ENCODE measurements at regions of chr2 and their contacts with region 1.

Region 1: GRCh38 chr2:198063242-198063641 is 258.8 kb downstream of the PLCL1 start:
- DNase-seq: no peak
- H3K4me3 ChIP-seq: no peak overlapping the region
- H3K27ac ChIP-seq: no peak overlapping the region
- H3K4me1 ChIP-seq: no peaks in the 10 kb centered on the region
- H3K27me3 ChIP-seq: no peaks in the 10 kb centered on the region
- CTCF ChIP-seq: no peak
- POLR2A ChIP-seq: no peak

Region 2: DNA sequence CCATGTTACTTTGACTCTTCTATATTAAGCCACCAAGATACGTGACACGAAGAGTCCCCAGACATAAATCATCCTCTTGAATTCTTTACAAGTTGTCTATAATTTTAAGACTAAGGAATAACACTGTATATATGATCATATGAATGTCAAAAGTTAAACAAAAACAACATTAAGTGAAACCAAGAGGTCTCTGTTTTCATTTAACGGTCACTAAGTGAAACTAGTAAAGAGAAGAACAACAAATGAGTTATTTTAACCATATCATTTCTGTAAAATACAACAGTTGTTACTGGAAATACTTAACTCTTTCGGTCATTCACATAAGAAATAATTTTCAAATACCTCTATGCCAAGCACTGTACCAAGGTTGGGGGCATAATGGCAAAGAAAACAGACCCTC is 1846.1 kb before region 1 on chr2:
- intact Hi-C with region 1: loop called (anchors 5 kb)
- DNase-seq: no peak
- H3K4me3 ChIP-seq: no peak overlapping the region
- H3K27ac ChIP-seq: no peak overlapping the region
- H3K4me1 ChIP-seq: no peaks in the 10 kb centered on the region
- H3K27me3 ChIP-seq: no peaks in the 10 kb centered on the region
- CTCF ChIP-seq: no peak
- POLR2A ChIP-seq: no peak